Activated CD4-positive, alpha-beta memory T cell treated with anti-CD3 and anti-CD28 coated beads for 36 hours (primary cell): ENCODE measurements at regions of chr15 and their contacts with region 1.

Region 1: GRCh38 chr15:75453703-75454470 is 2.4 kb upstream of the SIN3A start:
- DNase-seq: peak; percentile 98
- H3K4me3 Mint-ChIP-seq: peak overlapping the region; percentile 97
- H3K27ac Mint-ChIP-seq: peak overlapping the region; percentile 99
- H3K4me1 Mint-ChIP-seq: peaks cover 24% of the 10 kb centered on the region
- H3K27me3 Mint-ChIP-seq: no peaks in the 10 kb centered on the region

Region 2: DNA sequence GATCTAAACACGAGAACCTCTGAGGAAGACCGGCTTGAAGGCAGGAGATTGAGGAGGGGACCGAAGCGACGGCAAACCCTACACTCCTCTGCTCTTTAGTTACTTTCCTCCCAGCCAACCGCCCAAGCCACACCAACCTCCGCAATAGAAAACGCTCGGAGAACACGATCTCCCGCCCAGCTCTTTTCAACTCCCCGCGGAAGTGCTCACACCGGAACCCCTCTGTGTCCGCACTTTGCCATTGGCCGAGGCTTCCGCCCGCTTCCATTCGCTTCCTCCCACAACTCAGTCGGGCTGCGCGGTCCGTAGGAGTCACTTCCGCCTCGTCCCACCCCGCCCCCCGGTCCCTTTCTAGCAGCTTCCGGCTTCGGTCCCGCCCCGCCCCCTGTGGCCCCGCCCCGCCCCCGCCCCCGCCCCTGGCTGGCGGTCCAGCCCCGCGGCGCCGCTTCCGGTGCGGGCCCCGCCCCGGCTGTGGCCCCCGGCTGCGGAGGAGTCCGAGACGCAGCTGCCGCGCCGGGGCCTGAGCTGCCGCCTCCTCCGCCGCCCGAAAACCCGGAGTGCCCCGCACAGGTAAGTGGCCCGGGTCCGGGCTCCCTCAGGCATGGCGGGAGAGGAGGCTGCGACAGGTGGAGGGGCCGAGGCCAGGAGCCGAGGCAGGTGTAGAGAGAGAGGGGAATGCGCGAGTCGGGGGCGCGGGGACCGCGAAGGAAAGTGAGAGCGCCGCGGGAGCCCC is 913.0 kb before region 1 on chr15 and contains the start of gene ARID3B:
- CTCF ChIA-PET with region 1: no interaction called
- POLR2A ChIA-PET with region 1: interaction called, 3 read pairs
- intact Hi-C with region 1: loop called (anchors 2 kb)
- DNase-seq: peak; percentile 99
- H3K4me3 Mint-ChIP-seq: peak within 1 kb of the TSS; percentile 99
- H3K27ac Mint-ChIP-seq: peak within 1 kb of the TSS; percentile 95
- H3K4me1 Mint-ChIP-seq: peaks cover 48% of the 10 kb centered on the region
- H3K27me3 Mint-ChIP-seq: no peaks in the 10 kb centered on the region
- total RNA-seq, gene ARID3B: 27.3 to 28.6 TPM

Region 3: DNA sequence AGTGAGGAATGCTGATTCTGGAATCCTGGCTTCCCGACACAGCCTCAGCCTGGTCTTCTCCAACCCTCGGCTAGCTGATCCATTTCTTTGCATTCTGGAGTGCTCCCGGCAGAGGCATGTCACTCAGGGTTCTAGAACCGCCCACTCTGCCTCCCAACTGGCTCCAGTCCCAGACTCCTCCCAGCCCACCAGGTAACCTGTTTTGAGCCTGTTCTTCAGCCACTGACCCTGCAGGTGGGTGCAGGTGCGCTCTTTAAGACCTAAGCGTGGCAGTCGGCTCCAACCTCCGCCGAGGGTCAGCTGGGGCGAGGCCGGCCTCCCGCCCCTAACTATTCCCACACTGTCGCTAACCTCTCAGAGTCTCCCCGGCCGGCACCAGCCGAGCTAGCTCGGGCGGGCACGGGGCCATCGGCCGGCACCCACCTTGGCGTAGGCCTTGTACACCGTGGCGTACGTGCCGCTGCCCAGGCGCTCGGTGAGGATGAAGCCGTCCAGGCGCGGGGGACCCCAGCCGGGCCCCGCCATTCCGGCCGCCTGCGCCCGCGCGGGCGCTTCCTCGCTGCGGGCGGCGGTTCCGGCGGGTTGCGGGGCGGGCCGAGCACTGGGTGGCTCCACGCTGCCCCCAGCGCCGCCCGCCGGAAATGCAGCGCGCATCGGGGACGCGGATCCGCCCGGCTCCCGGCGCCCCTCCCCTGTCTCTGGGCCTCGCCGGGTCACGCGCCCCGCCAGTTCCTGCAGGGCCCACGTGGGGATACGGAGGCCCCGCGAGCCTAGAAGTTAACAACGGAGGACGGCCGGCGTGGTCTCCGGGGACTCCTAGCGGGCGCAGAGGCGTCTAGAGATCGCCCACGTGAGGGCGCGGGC is 611.1 kb before region 1 on chr15 and contains the start of gene ULK3:
- CTCF ChIA-PET with region 1: no interaction called
- POLR2A ChIA-PET with region 1: no interaction called
- intact Hi-C with region 1: loop called (anchors 5 kb)
- DNase-seq: peak; percentile 95
- H3K4me3 Mint-ChIP-seq: peak within 1 kb of the TSS; percentile 92
- H3K27ac Mint-ChIP-seq: peak within 1 kb of the TSS; percentile 93
- H3K4me1 Mint-ChIP-seq: peaks cover 44% of the 10 kb centered on the region
- H3K27me3 Mint-ChIP-seq: no peaks in the 10 kb centered on the region
- total RNA-seq, gene ULK3: 51.4 to 57.6 TPM

Region 4: DNA sequence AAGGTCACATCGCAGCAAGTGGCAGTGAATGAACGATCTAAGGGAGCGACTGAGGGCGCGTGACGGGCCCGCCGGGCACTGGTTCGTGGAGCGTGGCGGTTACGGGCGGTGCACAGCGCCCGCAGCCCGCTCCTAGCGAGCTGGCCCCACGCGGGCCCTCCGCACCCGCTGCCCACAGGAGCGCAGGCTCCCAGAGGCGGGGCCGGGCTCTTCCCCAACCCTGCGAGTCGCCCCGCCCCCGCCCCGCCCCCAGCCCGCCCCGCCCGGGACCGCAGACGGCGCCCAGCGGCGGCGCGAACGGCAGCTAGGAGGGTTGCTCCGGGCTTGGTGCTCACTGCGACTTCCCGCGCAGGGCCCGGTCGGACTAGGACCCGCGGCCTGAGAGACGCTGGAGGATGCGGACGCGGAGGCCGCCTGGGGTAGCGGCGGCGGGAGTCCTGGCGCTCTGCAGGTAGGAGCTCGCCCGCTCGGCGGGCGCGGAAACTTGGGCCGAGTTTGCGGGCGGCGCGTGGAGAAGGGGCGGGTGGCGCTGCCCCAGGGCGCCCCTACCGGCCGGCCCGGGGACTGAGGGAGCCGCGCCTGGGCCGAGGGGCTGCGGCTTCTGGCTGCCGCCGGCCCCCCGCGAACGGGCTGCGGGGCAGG is 252.2 kb before region 1 on chr15 and contains the start of gene C15orf39:
- CTCF ChIA-PET with region 1: no interaction called
- POLR2A ChIA-PET with region 1: interaction called, 4 read pairs
- intact Hi-C with region 1: loop called (anchors 5 kb)
- DNase-seq: peak; percentile 80
- H3K4me3 Mint-ChIP-seq: peak within 1 kb of the TSS; percentile 89
- H3K27ac Mint-ChIP-seq: peak within 1 kb of the TSS; percentile 84
- H3K4me1 Mint-ChIP-seq: peaks cover 35% of the 10 kb centered on the region
- H3K27me3 Mint-ChIP-seq: no peaks in the 10 kb centered on the region
- total RNA-seq, gene C15orf39: 14.1 to 14.2 TPM

Region 5: DNA sequence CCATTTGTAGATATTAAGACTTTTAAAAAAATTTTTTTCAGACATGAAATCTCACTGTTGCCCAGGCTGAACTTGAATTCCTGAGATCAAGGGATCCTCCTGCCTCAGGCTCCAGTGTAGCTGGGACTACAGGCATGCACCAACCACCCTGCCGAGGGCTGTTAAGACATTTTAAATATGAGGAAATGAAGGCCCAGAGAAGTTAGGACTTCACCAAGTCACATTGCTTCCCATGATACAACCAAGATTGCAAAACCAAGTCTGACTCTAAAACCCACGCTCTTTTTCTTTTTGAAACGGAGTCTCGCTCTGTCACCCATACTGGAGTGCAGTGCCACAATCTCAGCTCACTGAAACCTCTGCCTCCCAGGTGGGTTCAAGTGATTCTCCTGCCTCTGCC is 97.2 kb after region 1 on chr15:
- CTCF ChIA-PET with region 1: no interaction called
- POLR2A ChIA-PET with region 1: no interaction called
- intact Hi-C with region 1: no loop called
- DNase-seq: no peak
- H3K4me3 Mint-ChIP-seq: no peak overlapping the region
- H3K27ac Mint-ChIP-seq: no peak overlapping the region
- H3K4me1 Mint-ChIP-seq: peaks cover 5% of the 10 kb centered on the region
- H3K27me3 Mint-ChIP-seq: no peaks in the 10 kb centered on the region

Region 6: DNA sequence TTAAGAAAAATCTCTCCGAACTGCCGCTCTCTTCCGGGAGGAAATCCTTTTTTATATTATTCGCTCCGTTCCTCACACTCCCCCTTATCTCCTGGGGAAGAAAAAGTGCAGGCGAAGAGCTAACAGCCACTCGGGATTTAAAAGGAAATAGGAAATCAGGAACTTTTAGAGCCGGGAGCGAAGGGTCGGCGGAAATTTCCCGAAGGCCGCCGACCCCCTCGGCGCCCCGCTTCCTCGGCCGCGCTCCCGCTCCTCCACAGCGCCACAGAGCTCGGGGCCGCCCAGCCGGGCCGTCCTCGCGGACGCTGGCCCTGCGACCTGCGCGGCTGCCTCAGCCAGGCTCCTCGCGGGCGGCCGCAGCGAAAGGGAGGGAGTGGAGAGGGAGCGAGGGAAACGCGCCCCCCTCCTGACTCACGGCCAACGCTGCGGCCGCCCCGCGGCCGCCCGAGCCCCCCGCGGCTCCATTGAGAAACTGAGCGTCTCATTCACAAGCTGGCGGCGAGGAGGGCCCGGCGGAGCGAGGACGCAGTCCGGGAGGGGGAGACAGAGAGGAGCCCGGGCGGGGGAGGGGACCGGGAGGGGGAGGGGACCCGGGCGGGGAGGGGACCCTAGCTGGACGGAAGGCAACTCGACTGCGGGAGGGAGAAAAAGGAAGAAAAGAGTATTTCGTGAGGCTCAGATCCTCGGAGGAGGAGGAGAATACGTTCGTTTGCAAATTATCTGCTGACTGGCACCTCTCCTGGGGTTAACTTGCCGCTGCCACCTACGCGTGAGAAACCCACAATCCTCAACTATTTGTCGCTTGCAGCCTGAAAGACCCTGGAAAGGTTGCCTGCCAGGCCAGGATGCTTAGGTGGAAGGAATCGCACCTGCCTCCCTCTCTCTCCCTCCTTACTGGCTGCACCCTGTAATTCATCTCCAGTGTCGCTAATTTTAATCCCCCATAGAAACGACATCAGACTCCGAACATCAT is 125.3 kb after region 1 on chr15 and contains the start of gene PTPN9:
- CTCF ChIA-PET with region 1: interaction called, 12 read pairs
- POLR2A ChIA-PET with region 1: interaction called, 17 read pairs
- intact Hi-C with region 1: loop called (anchors 2 kb)
- DNase-seq: peak; percentile 84
- H3K4me3 Mint-ChIP-seq: peak within 1 kb of the TSS; percentile 91
- H3K27ac Mint-ChIP-seq: peak within 1 kb of the TSS; percentile 93
- H3K4me1 Mint-ChIP-seq: peaks cover 16% of the 10 kb centered on the region
- H3K27me3 Mint-ChIP-seq: no peaks in the 10 kb centered on the region
- total RNA-seq, gene PTPN9: 19.2 to 20.9 TPM

Region 7: DNA sequence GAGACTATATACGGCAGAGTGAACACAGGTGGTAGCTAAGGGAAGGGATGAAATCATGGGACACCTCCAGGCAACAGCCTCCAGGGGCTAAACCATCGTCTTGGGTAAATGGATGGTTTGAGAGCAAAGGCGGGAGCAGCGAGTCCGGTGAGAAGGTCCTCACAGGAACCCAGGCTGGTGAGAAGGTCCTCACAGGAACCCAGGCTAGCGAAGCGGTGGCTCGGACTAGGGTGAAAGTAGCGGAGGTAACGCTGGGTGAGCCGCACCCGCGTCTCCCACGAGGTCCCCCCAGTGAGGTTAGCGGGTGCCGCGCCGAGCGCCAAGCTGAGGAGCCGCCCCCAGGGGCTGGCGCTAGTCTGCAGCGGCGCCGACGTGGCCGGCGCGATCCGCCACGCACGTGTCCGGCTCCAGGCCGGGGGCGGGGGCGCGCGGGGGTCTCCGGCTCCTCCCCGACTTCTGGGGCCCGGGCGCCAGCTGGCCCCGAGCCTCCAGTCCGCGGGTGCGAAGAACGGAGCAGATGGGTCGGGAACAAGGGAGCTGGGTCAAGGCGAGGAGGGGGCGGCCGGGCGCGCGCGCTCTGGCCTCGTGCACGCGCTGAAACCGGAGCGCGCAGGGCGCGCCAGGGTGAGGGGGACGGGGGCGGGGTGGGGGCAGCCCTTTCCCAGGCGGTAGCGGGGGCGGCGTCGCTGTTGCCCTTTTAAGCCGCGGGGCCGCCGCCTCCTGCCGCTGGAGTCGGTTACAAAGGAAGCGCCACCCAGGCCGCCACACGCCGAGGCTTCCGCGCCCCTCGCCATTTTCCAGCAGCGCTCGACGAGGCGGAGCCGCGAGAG is 389.1 kb after region 1 on chr15 and contains the start of gene UBE2Q2:
- CTCF ChIA-PET with region 1: interaction called, 3 read pairs
- POLR2A ChIA-PET with region 1: interaction called, 3 read pairs
- intact Hi-C with region 1: loop called (anchors 1 kb)
- DNase-seq: peak; percentile 80
- H3K4me3 Mint-ChIP-seq: peak within 1 kb of the TSS; percentile 89
- H3K27ac Mint-ChIP-seq: peak within 1 kb of the TSS; percentile 86
- H3K4me1 Mint-ChIP-seq: peaks cover 35% of the 10 kb centered on the region
- H3K27me3 Mint-ChIP-seq: peaks cover 3% of the 10 kb centered on the region
- total RNA-seq, gene UBE2Q2: 19.7 to 19.8 TPM